Aorta (tissue), 5 donors: ENCODE measurements at regions of chr2 and their contacts with region 1.

Region 1: DNA sequence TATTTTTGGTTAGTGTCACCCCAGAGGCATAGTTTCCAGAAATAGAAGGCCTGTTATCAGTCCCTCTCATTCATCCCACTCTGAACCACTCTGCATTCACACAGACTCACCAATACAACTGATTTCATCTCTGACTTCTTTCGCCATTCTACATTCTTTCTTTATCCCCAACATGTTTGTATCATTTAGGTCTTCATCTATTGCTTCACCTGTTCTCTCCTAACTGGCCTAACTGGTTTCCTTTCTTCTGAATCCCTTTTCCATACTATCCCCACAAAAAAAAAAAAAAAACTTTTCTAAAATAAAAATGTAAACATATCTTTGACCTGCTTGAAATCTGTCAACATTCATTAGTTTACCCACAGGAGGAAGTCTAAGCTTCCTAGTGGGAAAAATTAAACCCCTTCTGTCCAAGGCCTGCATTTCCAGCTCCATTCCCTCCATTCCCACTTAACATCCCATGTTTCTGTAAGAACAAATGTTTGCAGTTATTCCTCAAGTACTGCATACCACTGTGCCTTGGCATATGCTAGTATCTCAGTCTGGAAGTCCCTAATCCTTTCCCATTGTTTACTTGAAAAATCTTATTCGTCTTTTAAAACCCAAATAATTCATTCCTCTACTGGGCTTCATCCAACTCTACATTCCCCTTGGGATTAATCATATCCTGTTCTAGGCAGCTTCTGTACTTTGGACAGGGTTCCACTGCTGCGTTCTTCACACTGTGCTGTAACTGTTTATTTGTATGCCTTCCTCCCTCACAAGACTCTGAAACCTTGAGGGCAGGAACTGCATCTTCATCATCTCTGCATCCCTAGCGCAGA is 68.5 kb downstream of the FIGN start:
- DNase-seq: peak in 1 of 2 donors; percentile 47
- ATAC-seq: peak; percentile 65
- H3K4me3 ChIP-seq: no peak overlapping the region
- H3K27ac ChIP-seq: peak overlapping the region in 1 of 2 donors; percentile 40
- H3K4me1 ChIP-seq: peaks cover 2 to 3% of the 10 kb centered on the region in 2 donors
- H3K27me3 ChIP-seq: no peaks in the 10 kb centered on the region

Region 2: GRCh38 chr2:163729636-163730273 is 62.5 kb after region 1 on chr2:
- intact Hi-C with region 1: loop called in 1 of 2 experiments (anchors 10 kb)
- DNase-seq: no peak
- ATAC-seq: no peak
- H3K4me3 ChIP-seq: peak overlapping the region in 1 of 2 donors; percentile 21
- H3K27ac ChIP-seq: peak overlapping the region; percentile 32 to 44
- H3K4me1 ChIP-seq: no peaks in the 10 kb centered on the region
- H3K27me3 ChIP-seq: no peaks in the 10 kb centered on the region

Region 3: DNA sequence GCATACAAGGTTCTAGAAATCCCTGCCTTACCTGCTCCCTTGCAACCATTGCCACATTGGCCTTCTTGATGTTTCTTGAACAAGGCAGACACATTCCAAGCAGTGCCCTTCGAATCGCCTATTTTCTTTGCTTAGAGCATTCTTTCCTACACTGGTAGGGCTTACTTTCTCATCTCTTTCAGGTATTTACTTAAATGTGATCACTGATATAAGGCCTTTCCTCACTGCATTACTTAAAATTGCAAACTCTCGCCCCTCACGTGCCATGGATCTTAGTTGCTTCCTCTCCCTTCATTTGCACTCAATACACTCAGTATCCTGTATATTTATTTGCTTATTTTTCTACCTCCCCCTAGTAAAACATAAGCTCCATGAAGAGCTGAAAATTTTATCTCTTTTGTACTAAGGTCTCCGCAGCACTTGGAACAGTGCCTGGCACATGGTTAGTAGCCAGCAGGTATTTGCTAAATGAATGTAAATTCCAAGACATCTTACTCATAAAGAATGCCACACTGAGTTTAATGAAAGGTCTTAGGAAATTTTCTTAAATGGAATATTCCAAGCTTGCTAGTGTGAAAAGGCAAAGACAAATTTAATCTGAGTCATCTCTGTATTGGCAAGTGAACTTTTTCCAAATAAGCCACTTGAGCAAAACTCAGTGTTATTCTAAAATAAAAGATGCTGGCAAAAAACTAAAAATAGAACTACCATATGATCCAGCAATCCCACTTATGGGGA is 110.9 kb after region 1 on chr2:
- intact Hi-C with region 1: loop called in 1 of 2 experiments (anchors 10 kb)
- DNase-seq: peak; percentile 64 to 75
- ATAC-seq: no peak
- H3K4me3 ChIP-seq: no peak overlapping the region
- H3K27ac ChIP-seq: peak overlapping the region in 1 of 2 donors; percentile 17
- H3K4me1 ChIP-seq: no peaks in the 10 kb centered on the region
- H3K27me3 ChIP-seq: no peaks in the 10 kb centered on the region